HepG2 (cell line): ENCODE measurements at regions of chr5 and their contacts with region 1.

Region 1: GRCh38 chr5:121949867-121950266 is 11.9 kb upstream of the SRFBP1 start:
- DNase-seq: peak; percentile 34
- ATAC-seq: peak; percentile 71
- H3K4me3 ChIP-seq: no peak overlapping the region
- H3K27ac ChIP-seq: no peak overlapping the region
- H3K4me1 ChIP-seq: no peaks in the 10 kb centered on the region
- H3K27me3 ChIP-seq: no peaks in the 10 kb centered on the region
- CTCF ChIP-seq: peak; percentile 71
- EP300 ChIP-seq: no peak
- POLR2A ChIP-seq: no peak
- RAD21 ChIP-seq: 0 out of 2 replicates have a peak, but pooled peaks have one; percentile 33

Region 2: GRCh38 chr5:120655828-120656435 is 1293.9 kb before region 1 on chr5:
- CTCF ChIA-PET with region 1: interaction called, 20 read pairs
- POLR2A ChIA-PET with region 1: no interaction called
- in situ Hi-C with region 1: loop called (anchors 25 kb)
- intact Hi-C with region 1: loop called (anchors 2 kb)
- DNase-seq: peak; percentile 18
- ATAC-seq: peak; percentile 81
- H3K4me3 ChIP-seq: no peak overlapping the region
- H3K27ac ChIP-seq: no peak overlapping the region
- H3K4me1 ChIP-seq: no peaks in the 10 kb centered on the region
- H3K27me3 ChIP-seq: no peaks in the 10 kb centered on the region
- CTCF ChIP-seq: peak; percentile 69
- EP300 ChIP-seq: no peak
- POLR2A ChIP-seq: no peak
- RAD21 ChIP-seq: no peak; the same call in 1 of the 2 replicates

Region 3: GRCh38 chr5:120817044-120817985 is 1132.6 kb before region 1 on chr5:
- CTCF ChIA-PET with region 1: interaction called, 3 read pairs
- POLR2A ChIA-PET with region 1: no interaction called
- in situ Hi-C with region 1: no loop called
- intact Hi-C with region 1: loop called (anchors 2 kb)
- DNase-seq: no peak
- ATAC-seq: peak; percentile 83
- H3K4me3 ChIP-seq: no peak overlapping the region
- H3K27ac ChIP-seq: no peak overlapping the region
- H3K4me1 ChIP-seq: no peaks in the 10 kb centered on the region
- H3K27me3 ChIP-seq: no peaks in the 10 kb centered on the region
- CTCF ChIP-seq: peak; percentile 39; the same call in 1 of the 2 replicates
- EP300 ChIP-seq: no peak
- POLR2A ChIP-seq: no peak
- RAD21 ChIP-seq: no peak

Region 4: GRCh38 chr5:121630402-121630801 is 319.5 kb before region 1 on chr5:
- CTCF ChIA-PET with region 1: no interaction called
- POLR2A ChIA-PET with region 1: no interaction called
- in situ Hi-C with region 1: loop called (anchors 10 kb)
- intact Hi-C with region 1: loop called (anchors 2 kb)
- DNase-seq: peak; percentile 18
- ATAC-seq: peak; percentile 85
- H3K4me3 ChIP-seq: no peak overlapping the region
- H3K27ac ChIP-seq: no peak overlapping the region
- H3K4me1 ChIP-seq: no peaks in the 10 kb centered on the region
- H3K27me3 ChIP-seq: no peaks in the 10 kb centered on the region
- CTCF ChIP-seq: peak; percentile 66
- EP300 ChIP-seq: no peak
- POLR2A ChIP-seq: no peak
- RAD21 ChIP-seq: no peak